ENCODE measurements at regions of chr22 and their contacts with region 1.

Region 1: DNA sequence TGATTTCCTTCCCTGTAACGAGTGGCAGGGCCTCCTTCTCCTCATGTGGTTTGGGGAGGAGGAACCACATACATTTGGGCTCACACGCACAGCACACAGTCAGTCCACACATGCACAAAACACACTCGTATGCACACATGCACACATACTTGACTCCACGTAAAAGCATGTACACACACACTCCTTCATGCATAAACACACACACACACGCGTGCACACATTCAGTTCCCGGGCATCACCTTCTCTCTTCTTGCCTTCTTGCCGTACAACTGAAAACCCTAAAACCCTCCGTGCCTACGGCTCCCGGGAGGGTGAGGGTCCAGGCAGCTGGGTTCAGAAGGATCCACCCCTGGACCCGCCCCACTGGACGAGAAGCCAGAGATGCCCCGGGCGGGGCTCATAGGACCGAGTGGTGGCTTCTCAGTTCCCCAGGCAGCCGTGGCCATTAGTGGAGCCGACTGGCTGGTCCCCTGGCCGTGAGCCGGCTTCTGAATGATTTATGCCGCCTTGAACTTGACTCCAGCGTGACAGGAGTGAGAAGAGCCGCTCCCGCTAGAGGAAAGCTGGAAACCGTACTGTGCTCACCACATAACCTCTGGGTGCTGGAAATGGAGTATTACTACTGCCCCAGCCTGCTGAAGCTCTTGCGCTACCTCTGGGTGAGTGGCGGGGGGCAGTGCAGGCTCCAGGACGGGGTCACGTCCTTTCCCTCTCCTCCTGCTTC is 117.4 kb downstream of the KIAA1671 start:
- DNase-seq: no peak
- H3K4me3 ChIP-seq: no peak overlapping the region
- CTCF ChIP-seq: no peak
- POLR2A ChIP-seq: no peak

Region 2: DNA sequence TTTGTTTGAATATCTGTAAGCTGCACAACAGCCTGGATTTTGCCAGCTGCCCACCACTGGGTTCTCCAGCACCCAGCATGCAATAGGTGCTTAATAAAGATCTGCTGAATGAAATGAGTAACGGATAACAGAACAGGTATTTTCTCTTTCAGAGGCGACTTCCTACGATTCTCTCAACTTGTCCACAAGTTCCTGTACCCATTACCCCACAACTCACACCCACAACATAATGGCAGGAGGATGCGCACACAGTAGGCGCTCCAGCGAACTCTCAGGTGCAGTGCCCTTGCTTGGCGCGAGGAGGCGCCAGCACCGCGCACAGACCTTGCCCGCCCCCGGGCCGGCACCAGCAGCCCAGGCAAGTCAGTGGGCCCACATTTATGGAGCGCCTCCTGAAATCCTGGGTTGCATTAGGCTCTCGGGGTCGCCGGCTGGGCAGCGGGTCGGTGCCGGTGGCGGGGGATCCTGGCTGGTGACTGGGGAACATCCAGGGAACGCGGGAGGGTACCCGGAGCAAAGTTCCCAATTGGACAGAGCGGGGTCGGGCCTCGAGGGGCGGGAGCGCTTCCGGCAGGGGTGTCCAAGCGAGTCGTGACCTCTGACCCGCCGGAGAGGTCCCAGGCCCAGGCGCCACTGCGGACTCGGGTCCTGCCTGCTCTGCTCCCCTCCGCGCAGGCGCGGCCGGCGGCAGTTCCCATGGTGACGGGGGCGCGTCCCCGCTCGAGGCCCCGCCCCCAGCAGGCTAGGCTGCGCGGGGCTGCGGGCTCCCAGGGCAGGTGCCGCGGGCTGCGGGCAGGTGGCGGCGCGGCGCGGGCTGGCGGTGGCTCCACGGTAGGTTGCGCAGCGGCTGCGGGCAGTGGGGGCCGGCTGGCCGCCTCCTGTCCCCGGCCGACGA is 117.7 kb before region 1 on chr22 and contains the start of gene KIAA1671:
- intact Hi-C with region 1: no loop called
- DNase-seq: peak; percentile 64 to 94
- H3K4me3 ChIP-seq: peak within 1 kb of the TSS; percentile 50
- CTCF ChIP-seq: peak in 1 of 3 donors; percentile 88
- POLR2A ChIP-seq: no peak
- total RNA-seq, gene KIAA1671: 60.0 to 87.8 (median 85.1) TPM

Region 3: GRCh38 chr22:25536589-25536988 is 466.7 kb after region 1 on chr22:
- intact Hi-C with region 1: no loop called
- DNase-seq: no peak
- H3K4me3 ChIP-seq: no peak overlapping the region
- CTCF ChIP-seq: no peak
- POLR2A ChIP-seq: no peak

Region 4: DNA sequence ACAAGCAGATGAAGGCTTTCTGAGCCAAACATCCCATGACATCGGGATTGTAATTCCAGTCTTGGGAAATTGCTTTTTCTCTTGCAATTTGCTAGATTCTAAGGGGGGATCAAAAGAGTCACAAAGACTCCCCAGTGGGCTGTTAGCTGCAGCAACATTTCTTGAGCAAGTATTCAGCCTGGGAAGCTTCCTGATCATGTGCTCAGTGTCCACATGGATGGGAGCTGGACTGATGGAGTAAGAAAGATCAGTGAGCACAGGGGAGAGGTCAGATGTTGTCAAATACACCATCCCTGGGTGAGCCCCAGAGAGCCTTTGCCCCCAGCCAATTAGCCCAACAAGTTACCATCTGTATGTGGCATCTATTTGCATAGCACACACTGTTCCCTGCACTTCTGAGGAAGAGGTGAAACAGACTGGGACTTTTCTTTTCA is 484.3 kb after region 1 on chr22:
- intact Hi-C with region 1: loop called (anchors 10 kb)
- DNase-seq: peak in 1 of 2 donors; percentile 25
- H3K4me3 ChIP-seq: no peak overlapping the region
- CTCF ChIP-seq: no peak
- POLR2A ChIP-seq: no peak

Measured in lower leg skin (tissue), 4 donors.